H1 (cell line): ENCODE measurements at regions of chr21 and their contacts with region 1.

Region 1: DNA sequence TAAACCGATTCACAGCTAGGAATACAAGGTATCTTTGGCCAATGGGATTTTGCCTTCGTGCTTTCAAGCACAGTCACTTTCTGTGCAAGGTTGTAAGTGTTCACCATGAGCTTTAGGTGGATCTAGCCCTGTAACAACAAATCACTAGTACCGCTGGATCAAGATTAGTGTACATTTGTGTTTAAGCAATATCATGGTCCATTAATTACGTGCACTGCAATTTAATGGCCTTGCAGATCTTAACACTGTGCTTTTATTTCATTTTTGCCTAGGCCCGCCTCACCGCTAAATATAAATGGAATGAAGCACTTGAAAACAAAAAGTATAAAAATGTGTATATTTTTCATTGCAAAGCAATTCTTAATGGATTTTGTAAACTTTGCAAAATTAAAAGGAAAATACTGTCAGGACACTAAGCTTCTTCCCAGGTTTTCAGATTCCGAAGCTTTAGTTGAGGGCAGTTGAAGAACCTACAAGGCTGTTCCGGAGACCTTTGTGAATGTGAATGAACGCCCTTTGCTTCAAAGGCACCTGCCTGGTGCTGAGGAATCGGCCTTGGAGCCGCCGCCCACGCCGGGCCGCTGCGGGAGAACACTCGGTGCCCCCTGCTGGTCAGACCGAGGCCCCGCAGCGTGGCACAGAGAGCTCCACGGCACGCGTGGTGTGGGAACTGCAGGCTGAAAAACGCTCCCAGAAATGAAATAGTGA is 460.9 kb downstream of the DSCAM start:
- DNase-seq: peak; percentile 21 to 76
- H3K4me3 ChIP-seq: no peak overlapping the region
- H3K27ac ChIP-seq: no peak overlapping the region
- H3K4me1 ChIP-seq: no peaks in the 10 kb centered on the region
- H3K27me3 ChIP-seq: no peaks in the 10 kb centered on the region; a peak in 1 of 7 replicates
- CTCF ChIP-seq: peak; percentile 82 to 93 (median 83)
- EP300 ChIP-seq: 0 out of 3 replicates have a peak, but pooled peaks of 1 of the 2 experiments have one; percentile 12
- POLR2A ChIP-seq: no peak
- RAD21 ChIP-seq: peak; percentile 72 to 83

Region 2: DNA sequence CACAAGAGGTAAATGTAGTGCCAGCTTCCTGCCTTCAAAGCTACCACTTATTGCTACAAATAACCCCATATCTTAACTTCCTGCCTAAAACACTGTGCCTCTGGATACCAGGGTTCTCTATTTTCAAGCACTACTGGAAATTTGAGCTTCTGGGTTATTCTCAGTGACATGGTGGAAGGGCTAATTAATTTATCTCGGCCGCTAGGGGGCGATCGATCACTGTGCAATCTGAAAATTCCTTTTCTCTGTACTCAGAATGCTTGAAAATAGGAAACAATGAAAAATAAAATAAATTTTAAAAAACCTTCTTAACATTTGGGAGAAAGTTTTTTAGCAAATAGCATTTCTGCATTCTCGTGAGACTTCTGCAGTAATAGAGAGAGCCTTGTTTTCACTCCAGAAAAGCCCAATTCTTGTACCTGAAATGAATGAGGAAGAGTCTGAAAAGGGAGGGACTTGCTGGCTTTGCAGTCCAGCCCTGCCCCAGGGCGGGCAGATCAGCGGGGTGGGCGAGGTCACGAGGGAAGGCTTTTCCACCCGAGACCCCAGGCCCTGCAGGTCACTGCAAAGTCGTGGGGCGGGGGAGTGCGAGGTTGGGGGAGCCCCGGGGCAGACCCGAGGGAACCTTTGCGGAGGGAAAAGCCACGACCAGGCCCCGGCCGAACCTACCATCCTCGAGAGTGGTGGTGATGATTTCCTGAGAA is 242.1 kb before region 1 on chr21:
- CTCF ChIA-PET with region 1: interaction called, 14 read pairs
- POLR2A ChIA-PET with region 1: no interaction called
- DNase-seq: peak in 1 of 2 experiments; percentile 84
- H3K4me3 ChIP-seq: no peak overlapping the region
- H3K27ac ChIP-seq: no peak overlapping the region
- H3K4me1 ChIP-seq: no peaks in the 10 kb centered on the region
- H3K27me3 ChIP-seq: no peaks in the 10 kb centered on the region; a peak in 1 of 7 replicates
- CTCF ChIP-seq: peak in 2 of 3 experiments; percentile 53 to 58; a peak in 3 of 4 replicates
- EP300 ChIP-seq: no peak
- POLR2A ChIP-seq: no peak
- RAD21 ChIP-seq: peak; percentile 82 to 86

Region 3: GRCh38 chr21:40587736-40588346 is 201.8 kb after region 1 on chr21:
- CTCF ChIA-PET with region 1: no interaction called
- POLR2A ChIA-PET with region 1: no interaction called
- DNase-seq: no peak
- H3K4me3 ChIP-seq: no peak overlapping the region
- H3K27ac ChIP-seq: no peak overlapping the region
- H3K4me1 ChIP-seq: peaks cover 0 to 3% (median 0%) of the 10 kb centered on the region in 4 experiments; a peak in 3 of 7 replicates
- H3K27me3 ChIP-seq: peaks cover 0 to 1% (median 0%) of the 10 kb centered on the region in 4 experiments; a peak in 1 of 7 replicates
- CTCF ChIP-seq: no peak
- EP300 ChIP-seq: no peak
- POLR2A ChIP-seq: no peak
- RAD21 ChIP-seq: no peak